ENCODE measurements at regions of chr3 and their contacts with region 1.

Region 1: DNA sequence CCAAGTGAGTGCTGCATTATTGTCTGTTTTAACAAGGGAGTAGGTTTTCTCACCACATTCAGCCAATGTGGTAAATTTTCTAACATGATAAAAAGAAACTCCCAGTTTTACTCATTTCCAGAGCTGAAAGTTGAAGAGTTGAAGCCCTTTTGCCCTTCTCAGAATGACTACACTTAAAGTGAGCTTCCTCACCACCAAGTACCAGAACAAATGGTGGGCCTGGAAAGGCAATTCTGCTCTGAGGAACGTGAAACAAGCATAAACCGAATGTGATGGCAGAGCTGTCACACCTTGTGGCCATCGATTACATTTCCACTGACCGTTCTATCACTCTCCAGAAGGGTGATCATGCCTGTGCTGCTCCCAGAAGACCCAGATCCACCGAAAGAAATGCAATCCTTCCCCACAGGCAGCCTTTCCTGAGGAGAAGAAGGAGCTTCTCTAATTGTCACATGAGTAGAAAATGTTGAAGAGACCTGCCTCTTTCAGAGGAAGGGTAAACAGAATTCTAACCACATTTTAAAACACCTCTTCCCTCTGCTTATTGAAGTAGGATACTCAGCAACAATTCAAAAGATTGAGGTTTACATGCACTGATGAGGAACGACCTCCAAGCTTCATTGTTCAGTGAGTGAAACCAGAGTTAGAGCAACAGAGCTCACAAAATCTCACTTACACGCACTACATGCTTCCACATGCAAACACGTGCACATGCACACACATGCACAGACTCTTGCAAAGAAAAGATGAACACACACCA is 21.4 kb upstream of the CCR9 start:
- DNase-seq: peak; percentile 50
- H3K4me3 Mint-ChIP-seq: no peak overlapping the region
- H3K27ac Mint-ChIP-seq: no peak overlapping the region
- H3K4me1 Mint-ChIP-seq: peaks cover 51% of the 10 kb centered on the region
- H3K27me3 Mint-ChIP-seq: peaks cover 60% of the 10 kb centered on the region

Region 2: GRCh38 chr3:45746777-45747622 is 117.9 kb before region 1 on chr3:
- CTCF ChIA-PET with region 1: no interaction called
- POLR2A ChIA-PET with region 1: no interaction called
- intact Hi-C with region 1: no loop called
- DNase-seq: no peak
- H3K4me3 Mint-ChIP-seq: no peak overlapping the region
- H3K27ac Mint-ChIP-seq: no peak overlapping the region
- H3K4me1 Mint-ChIP-seq: peaks cover 5% of the 10 kb centered on the region
- H3K27me3 Mint-ChIP-seq: no peaks in the 10 kb centered on the region

Region 3: DNA sequence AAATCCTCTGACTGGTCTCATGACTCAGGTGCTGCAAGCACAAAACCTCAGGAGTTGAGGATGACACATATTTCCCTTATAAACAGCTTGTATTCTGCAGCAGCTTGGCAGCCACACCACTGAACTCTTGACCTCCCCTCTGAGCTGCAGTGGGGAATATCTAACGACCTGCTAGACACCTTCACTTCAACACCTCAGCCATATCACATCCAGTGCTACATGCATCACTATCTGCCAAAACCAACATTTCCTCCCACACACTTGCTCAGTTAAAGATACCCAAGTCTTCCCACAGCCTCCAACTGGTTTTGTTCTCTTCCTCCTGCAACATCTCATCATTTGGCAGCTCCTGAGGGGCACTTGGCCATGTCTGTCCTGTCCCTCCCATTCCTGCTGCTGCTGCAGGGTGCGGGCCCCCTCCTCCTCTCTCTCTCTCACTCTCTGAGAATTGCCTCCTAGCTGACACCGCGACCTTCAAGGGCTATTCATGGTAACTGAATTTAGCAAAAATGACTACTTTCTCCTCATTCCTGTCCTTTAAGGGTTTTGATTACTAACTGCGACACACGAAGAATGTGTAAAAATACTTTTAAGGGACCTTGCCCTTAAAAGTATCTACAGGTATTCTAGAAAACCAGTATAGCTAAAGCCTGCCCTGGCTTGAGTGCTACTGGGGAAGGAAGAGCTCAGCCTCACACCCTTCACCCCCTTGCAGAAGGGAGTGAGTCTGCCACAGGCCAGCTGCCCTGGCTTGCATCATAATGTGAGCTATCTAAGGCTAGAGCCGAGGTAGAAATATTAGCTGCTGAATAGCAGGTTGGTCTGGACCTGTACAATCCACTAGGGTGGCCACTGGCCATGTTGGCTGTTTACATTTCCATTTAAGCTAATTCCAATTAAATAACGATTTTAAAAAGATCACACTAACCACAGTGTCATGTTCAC is 16.4 kb after region 1 on chr3:
- CTCF ChIA-PET with region 1: interaction called, 3 read pairs
- POLR2A ChIA-PET with region 1: interaction called, 16 read pairs
- intact Hi-C with region 1: loop called (anchors 1 kb)
- DNase-seq: peak; percentile 67
- H3K4me3 Mint-ChIP-seq: no peak overlapping the region
- H3K27ac Mint-ChIP-seq: no peak overlapping the region
- H3K4me1 Mint-ChIP-seq: peaks cover 31% of the 10 kb centered on the region
- H3K27me3 Mint-ChIP-seq: peaks cover 24% of the 10 kb centered on the region

Region 4: DNA sequence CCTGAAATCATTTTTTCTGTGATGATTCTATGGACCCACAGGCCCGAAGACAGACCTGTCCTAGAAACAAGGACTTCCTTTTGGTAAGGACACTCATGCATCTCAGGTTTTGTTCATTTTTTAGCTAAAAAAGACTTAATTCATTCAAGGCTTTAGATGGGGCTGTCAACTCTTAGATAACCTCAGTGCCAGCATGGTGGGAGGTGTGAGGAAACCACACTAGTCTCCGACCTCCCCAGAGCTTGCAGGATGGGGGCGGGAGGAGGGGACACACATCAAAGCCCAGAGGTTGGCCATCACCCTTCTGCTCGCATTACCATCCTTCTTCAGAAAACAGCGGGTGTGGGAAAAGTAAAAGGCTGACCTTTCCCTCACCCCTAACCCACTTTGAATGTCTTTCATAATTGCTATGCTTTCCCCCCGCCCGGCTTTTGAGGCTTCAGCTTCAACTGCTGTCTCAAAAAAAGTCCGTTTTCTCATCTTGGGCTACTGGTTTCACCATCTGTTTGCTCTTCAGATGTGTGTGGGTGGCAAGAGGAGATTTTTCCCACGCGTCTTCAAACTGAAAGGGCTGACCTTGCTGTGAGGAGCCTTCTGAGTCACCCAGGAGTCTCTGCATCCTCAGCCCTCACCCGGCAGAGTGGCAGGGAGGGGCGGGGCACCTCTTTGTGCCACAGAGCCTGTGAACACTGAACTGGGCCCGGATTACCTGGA is 50.7 kb after region 1 on chr3:
- CTCF ChIA-PET with region 1: interaction called, 3 read pairs
- POLR2A ChIA-PET with region 1: interaction called, 9 read pairs
- intact Hi-C with region 1: loop called (anchors 1 kb)
- DNase-seq: peak; percentile 91
- H3K4me3 Mint-ChIP-seq: peak overlapping the region; percentile 46
- H3K27ac Mint-ChIP-seq: peak overlapping the region; percentile 61
- H3K4me1 Mint-ChIP-seq: peaks cover 44% of the 10 kb centered on the region
- H3K27me3 Mint-ChIP-seq: peaks cover 19% of the 10 kb centered on the region

Region 5: GRCh38 chr3:46098319-46098761 is 233.4 kb after region 1 on chr3:
- CTCF ChIA-PET with region 1: no interaction called
- POLR2A ChIA-PET with region 1: no interaction called
- intact Hi-C with region 1: loop called (anchors 5 kb)
- DNase-seq: peak; percentile 76
- H3K4me3 Mint-ChIP-seq: peak overlapping the region; percentile 36
- H3K27ac Mint-ChIP-seq: peak overlapping the region; percentile 85
- H3K4me1 Mint-ChIP-seq: peaks cover 42% of the 10 kb centered on the region
- H3K27me3 Mint-ChIP-seq: peaks cover 30% of the 10 kb centered on the region

Region 6: DNA sequence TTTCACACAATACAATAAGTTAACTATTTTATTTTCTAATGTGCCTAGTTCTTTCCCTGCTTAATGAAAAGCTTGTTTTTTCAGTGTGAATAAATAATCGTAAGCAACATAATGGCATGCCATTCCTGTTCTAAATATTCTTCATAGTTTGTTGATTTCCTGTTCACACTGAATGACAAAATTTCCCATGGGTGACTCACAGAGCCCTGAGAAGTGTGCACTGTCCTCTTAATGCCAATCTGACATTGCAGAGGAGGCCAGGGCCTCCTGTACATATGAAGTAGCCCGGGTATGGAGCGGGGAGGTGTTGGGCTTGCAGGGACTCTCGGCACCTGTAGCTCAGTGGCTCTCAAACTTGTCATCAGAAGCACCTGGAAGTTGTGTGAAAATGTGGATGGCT is 401.7 kb after region 1 on chr3:
- CTCF ChIA-PET with region 1: no interaction called
- POLR2A ChIA-PET with region 1: no interaction called
- intact Hi-C with region 1: loop called (anchors 10 kb)
- DNase-seq: no peak
- H3K4me3 Mint-ChIP-seq: no peak overlapping the region
- H3K27ac Mint-ChIP-seq: no peak overlapping the region
- H3K4me1 Mint-ChIP-seq: peaks cover 27% of the 10 kb centered on the region
- H3K27me3 Mint-ChIP-seq: peaks cover 18% of the 10 kb centered on the region

Measured in activated CD4-positive, alpha-beta memory T cell treated with anti-CD3 and anti-CD28 coated beads for 36 hours (primary cell).